ENCODE measurements at regions of chr20 and their contacts with region 1.

Region 1: DNA sequence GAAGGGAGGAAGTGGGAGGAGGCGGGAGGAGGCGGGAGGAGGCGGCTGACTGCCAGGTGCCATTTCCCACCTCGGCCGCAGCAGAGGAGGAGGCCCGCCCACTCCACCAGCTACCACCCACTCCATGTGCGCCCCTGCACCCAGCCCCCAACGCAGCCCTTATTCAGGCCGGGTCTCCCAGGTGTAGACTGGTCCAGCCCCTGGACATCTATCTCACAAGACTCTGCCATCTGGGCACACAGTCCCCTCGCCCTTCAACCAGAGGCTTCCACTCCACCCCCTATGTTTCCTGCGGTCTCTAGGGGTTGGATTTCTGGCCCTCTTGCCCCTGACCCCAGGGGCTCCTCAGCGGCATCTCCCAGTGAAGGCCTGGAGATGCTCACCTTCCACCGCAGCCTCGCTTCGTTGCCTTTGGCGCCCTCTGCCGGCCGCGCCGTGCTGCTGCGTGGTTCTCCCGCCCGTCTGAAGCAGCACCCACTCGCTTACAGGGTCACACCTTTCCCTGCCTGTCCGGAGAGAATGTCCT is 32.6 kb upstream of the FAM83D start:
- DNase-seq: no peak
- H3K4me3 ChIP-seq: no peak overlapping the region
- CTCF ChIP-seq: peak; percentile 100

Region 2: GRCh38 chr20:38645980-38646858 is 247.4 kb before region 1 on chr20:
- CTCF ChIA-PET with region 1: interaction called, 43 read pairs
- POLR2A ChIA-PET with region 1: no interaction called
- DNase-seq: no peak
- H3K4me3 ChIP-seq: peak overlapping the region; percentile 32; the same call in 1 of the 2 replicates
- CTCF ChIP-seq: peak; percentile 99

Region 3: GRCh38 chr20:38866265-38867061 is 27.2 kb before region 1 on chr20:
- CTCF ChIA-PET with region 1: interaction called, 10 read pairs
- POLR2A ChIA-PET with region 1: no interaction called
- DNase-seq: no peak
- H3K4me3 ChIP-seq: no peak overlapping the region
- CTCF ChIP-seq: no peak

Region 4: DNA sequence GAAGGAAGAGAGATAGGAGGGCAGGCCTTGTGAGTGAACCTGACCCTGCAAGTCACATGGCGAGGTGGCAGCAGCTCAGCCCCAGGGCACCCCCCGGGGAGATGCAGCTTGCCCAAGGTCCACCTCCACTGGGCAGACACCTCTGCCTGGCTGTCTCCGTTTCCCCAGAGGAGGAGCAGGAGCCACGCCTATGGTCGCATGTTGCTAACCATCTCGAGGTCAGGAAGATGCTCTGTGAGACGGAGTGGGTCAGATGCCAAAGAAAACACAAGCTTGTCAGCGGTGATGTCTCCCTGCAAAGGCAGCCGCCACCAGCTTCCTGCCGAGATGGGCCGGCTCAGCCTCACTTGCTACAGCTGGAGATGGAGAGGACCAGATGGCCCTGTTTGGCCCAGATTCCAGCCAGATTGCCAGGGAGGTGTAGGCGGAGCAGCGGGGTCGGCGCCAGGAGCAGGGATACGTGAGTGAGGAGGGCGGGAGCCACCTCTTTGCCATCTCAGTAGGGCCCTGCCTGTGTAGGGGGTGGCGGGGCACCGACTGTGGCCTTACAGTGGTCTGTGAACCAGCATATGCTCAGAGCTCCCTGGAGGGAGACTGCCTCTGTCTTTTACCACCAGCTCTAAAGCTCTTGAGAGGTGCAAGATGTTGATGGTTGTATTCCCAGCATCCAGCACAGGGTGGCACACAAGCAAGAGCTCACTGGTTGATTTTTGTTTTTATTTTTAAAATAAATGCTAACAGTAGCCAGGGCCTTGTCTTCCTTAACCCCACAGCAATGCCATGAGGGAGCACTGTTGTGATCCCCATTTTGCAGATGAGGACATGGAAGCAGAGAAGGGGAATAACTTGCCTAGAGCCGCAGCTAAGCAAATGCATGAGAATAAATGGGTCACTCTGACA is 10.3 kb before region 1 on chr20:
- CTCF ChIA-PET with region 1: interaction called, 40 read pairs
- POLR2A ChIA-PET with region 1: no interaction called
- DNase-seq: no peak
- H3K4me3 ChIP-seq: no peak overlapping the region
- CTCF ChIP-seq: no peak

Region 5: DNA sequence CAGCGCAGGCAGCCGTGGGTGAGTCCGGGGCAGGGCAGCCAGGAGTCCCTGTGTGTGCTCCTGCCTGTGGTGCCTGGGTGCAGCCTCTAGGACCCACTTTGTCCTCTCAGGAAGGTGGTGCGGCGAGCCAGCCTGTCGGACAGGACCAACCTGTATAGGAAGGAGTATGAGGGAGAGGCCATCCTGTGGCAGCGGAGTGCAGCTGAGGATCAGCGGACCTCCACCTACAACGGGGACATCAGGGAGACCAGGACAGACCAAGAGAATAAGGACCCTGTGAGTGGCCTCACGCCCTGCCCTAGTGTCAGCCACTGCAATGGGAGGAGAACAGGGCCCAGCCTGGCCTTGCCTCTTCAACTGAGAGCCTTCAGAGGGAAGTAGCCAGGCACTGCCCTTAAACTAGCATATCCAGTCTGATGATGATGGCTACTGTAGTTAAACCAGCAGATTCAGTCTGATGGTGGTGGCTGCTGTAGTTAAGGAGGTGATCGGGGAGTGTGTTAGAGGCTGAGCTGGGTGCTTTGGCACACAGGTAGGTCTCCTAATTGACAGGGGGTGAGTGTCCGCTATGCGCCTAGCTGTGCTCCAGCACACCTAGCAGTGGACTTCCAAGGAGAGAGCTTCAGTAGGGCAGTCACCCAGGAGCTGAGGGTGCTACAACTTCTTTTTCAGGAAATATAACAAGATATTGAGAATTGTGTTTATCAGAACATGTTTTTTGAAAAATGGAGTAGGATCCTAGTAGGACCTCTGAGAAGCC is 14.5 kb after region 1 on chr20:
- CTCF ChIA-PET with region 1: interaction called, 30 read pairs
- POLR2A ChIA-PET with region 1: no interaction called
- DNase-seq: no peak
- H3K4me3 ChIP-seq: no peak overlapping the region
- CTCF ChIP-seq: no peak

Region 6: DNA sequence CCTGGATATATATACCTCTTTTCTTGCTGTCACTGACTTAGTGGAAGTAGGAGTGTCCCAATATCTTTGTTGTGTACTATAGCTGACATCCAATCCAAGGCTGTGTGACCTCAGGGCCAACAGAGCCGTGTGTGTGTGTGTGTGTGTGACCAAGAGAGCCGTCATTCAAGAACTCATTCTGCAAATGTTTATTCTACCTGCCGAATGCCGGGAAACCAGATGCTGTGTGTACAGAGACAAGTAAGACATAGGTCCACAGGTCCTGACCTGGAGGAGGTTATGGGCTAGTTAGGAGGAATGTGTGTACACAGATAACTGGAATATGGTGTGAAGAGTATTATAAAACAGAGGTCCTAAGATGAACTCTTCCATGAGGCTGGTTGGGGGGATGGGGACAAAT is 258.5 kb after region 1 on chr20:
- CTCF ChIA-PET with region 1: no interaction called
- POLR2A ChIA-PET with region 1: no interaction called
- DNase-seq: no peak
- H3K4me3 ChIP-seq: no peak overlapping the region
- CTCF ChIP-seq: no peak

Region 7: GRCh38 chr20:39516964-39517363 is 623.3 kb after region 1 on chr20:
- CTCF ChIA-PET with region 1: no interaction called
- POLR2A ChIA-PET with region 1: no interaction called
- DNase-seq: no peak
- H3K4me3 ChIP-seq: no peak overlapping the region
- CTCF ChIP-seq: no peak

Measured in AG04449 (cell line).